Natural killer cell (primary cell): ENCODE measurements at regions of chr1 and their contacts with region 1.

Region 1: DNA sequence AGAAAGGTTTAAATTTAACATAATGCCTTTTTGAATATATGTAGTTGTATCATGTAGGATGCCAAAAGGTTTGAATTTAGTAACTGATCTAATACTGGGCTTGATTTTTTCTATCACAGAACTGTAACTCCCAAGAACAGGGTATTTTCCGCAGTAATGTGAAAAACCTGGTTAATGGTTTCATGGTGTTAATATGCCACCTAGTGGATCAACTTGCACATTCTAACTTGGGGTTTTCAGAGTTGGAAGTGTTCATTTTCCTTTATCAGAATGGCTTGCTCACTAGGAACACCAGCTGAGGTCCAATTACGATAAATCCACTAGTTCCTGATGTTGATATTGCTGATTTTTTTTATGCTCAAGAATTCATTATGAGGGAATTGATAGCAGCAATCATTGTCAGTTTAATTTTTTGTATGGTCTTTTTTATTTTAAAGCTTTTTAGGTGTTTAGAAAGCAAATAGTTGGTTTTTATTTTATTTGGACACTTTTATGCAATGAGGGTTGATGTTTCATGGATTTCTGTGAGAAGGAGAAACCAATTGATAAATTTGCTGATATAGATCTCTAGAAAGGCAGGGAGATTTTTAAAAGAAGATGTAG is 157.2 kb downstream of the PLA2G4A start:
- DNase-seq: peak in 1 of 2 donors; percentile 59
- ATAC-seq: peak; percentile 49 to 60 (median 57)
- H3K4me3 ChIP-seq: no peak overlapping the region
- H3K4me3 Mint-ChIP-seq: no peak overlapping the region
- H3K27ac ChIP-seq: no peak overlapping the region
- H3K27ac Mint-ChIP-seq: no peak overlapping the region
- H3K4me1 ChIP-seq: no peaks in the 10 kb centered on the region
- H3K4me1 Mint-ChIP-seq: peaks cover 12 to 14% of the 10 kb centered on the region in 2 donors
- H3K27me3 ChIP-seq: no peaks in the 10 kb centered on the region
- H3K27me3 Mint-ChIP-seq: no peaks in the 10 kb centered on the region
- CTCF ChIP-seq: peak; percentile 58

Region 2: DNA sequence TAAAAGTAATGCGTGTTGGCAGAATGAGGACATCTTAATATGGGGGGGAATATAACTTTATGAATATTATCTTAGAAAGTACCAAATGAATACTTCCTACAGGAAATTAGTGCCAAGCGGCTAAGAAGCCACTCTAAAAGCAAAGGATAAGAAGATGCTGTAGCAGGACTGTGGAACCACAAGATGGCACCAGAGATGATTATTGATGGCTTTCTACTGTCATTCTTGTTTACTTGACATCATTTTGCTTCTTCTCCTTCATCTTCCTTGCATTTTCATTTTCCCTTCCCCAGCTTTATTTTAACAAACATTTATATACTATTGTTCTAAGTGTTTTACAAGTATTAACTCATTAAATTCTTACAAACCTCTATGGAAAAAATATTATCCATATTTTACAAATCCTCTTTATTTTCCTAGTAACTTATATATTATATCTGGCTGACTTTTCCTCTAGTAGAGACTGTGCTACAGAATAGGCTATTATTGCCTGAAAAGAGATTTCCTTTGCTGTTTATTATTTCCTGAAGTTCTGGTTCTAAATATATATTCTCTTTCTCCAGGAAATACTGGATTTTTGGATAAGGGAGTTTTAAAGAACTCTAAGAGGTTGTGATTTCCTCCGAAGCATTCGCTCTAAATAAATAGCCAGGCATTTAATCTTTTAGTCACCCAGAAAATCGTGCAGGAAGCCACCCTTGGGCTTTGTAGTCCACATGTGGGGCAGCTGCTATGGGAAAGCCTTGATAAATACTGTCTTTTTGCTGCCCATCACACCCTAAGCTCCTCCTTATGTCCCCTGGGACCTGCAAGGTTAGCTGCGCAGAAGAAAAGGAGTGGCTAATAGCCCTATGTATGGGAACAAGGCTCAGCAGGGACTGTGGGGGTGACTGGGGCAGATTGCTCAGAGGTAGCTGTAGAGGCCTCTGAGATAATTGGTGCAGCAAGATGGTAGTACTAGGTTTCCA is 680.7 kb before region 1 on chr1:
- intact Hi-C with region 1: loop called (anchors 10 kb)
- DNase-seq: peak in 1 of 2 donors; percentile 70
- ATAC-seq: peak in 1 of 3 donors; percentile 51
- H3K4me3 ChIP-seq: no peak overlapping the region
- H3K4me3 Mint-ChIP-seq: no peak overlapping the region
- H3K27ac ChIP-seq: no peak overlapping the region
- H3K27ac Mint-ChIP-seq: no peak overlapping the region
- H3K4me1 ChIP-seq: peaks cover 11% of the 10 kb centered on the region
- H3K4me1 Mint-ChIP-seq: peaks cover 5 to 7% of the 10 kb centered on the region in 2 donors
- H3K27me3 ChIP-seq: no peaks in the 10 kb centered on the region
- H3K27me3 Mint-ChIP-seq: no peaks in the 10 kb centered on the region
- CTCF ChIP-seq: no peak

Region 3: DNA sequence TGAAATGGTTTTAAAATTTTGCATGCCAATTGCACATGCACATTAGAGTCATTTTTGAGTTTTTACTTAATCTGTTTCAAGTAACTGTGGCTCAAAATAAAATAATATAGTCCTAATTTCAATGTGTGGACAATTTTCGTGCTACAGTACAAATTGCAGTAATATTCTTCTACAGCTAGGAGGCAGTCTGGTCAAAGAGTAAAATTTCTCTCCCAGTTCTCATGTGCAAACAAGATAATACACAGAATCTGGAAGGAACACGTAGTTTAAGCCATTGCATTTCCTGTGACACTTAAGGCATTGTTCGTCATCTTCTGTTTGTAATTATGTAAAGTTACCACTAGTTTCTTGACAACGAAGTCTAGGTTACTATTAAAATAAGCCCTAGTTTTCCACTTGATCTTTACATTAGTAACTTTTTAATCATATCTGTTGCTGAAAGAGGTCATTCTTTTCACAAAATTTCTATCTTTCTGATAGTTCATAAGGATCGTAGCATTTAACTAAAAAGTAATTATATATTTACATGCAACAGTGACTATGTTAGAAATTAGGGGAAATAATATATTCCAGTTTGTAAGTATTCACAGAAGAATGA is 581.4 kb before region 1 on chr1:
- intact Hi-C with region 1: loop called (anchors 1 kb)
- DNase-seq: peak in 1 of 2 donors; percentile 60
- ATAC-seq: peak; percentile 83 to 95 (median 87)
- H3K4me3 ChIP-seq: no peak overlapping the region
- H3K4me3 Mint-ChIP-seq: no peak overlapping the region
- H3K27ac ChIP-seq: no peak overlapping the region
- H3K27ac Mint-ChIP-seq: peak overlapping the region in 1 of 2 donors; percentile 57
- H3K4me1 ChIP-seq: no peaks in the 10 kb centered on the region
- H3K4me1 Mint-ChIP-seq: no peaks in the 10 kb centered on the region
- H3K27me3 ChIP-seq: no peaks in the 10 kb centered on the region
- H3K27me3 Mint-ChIP-seq: no peaks in the 10 kb centered on the region
- CTCF ChIP-seq: peak; percentile 81

Region 4: DNA sequence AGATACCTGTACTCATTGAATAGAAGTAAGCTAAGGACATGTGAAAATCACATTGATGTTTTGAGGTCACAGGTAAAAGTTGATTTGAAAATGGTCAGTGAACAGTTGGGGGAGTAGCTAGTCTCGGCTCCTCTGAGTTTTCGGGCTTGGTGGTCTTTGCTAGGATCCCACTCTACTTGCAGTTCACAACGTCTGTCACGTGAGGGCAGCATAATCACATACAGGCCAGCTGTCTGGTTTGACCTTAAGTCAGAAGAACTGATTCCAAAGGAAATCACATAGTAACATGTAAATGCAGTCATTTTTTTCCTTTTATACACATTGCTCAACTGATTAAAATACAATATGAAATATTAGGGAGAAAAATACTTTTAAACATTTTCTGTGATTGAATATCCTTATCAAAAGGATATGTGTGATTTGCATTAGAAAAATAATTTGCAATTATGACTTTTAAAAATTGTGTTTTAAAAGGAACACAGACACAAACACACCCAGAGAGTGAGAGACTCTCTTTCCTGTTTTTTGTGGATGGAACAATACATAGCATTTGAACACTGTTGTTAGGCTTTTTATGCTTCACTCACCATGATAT is 503.2 kb before region 1 on chr1:
- intact Hi-C with region 1: loop called (anchors 1 kb)
- DNase-seq: peak in 1 of 2 donors; percentile 55
- ATAC-seq: peak in 2 of 3 donors; percentile 48 to 63
- H3K4me3 ChIP-seq: no peak overlapping the region
- H3K4me3 Mint-ChIP-seq: no peak overlapping the region
- H3K27ac ChIP-seq: no peak overlapping the region
- H3K27ac Mint-ChIP-seq: no peak overlapping the region
- H3K4me1 ChIP-seq: no peaks in the 10 kb centered on the region
- H3K4me1 Mint-ChIP-seq: no peaks in the 10 kb centered on the region
- H3K27me3 ChIP-seq: no peaks in the 10 kb centered on the region
- H3K27me3 Mint-ChIP-seq: no peaks in the 10 kb centered on the region
- CTCF ChIP-seq: peak; percentile 43

Region 5: GRCh38 chr1:186605762-186606350 is 380.1 kb before region 1 on chr1:
- intact Hi-C with region 1: loop called (anchors 2 kb)
- DNase-seq: peak in 1 of 2 donors; percentile 45
- ATAC-seq: peak in 1 of 3 donors; percentile 37
- H3K4me3 ChIP-seq: no peak overlapping the region
- H3K4me3 Mint-ChIP-seq: no peak overlapping the region
- H3K27ac ChIP-seq: no peak overlapping the region
- H3K27ac Mint-ChIP-seq: no peak overlapping the region
- H3K4me1 ChIP-seq: no peaks in the 10 kb centered on the region
- H3K4me1 Mint-ChIP-seq: no peaks in the 10 kb centered on the region
- H3K27me3 ChIP-seq: no peaks in the 10 kb centered on the region
- H3K27me3 Mint-ChIP-seq: no peaks in the 10 kb centered on the region
- CTCF ChIP-seq: no peak